Activated CD8-positive, alpha-beta T cell treated with anti-CD3 and anti-CD28 coated beads for 36 hours (primary cell): ENCODE measurements at regions of chr17 and their contacts with region 1.

Region 1: GRCh38 chr17:76182016-76182764 is 41.1 kb upstream of the FOXJ1 start:
- DNase-seq: peak; percentile 99
- ATAC-seq: peak; percentile 80
- H3K4me3 Mint-ChIP-seq: peak overlapping the region; percentile 56
- H3K27ac Mint-ChIP-seq: peak overlapping the region; percentile 96
- H3K4me1 Mint-ChIP-seq: peaks cover 65% of the 10 kb centered on the region
- H3K27me3 Mint-ChIP-seq: no peaks in the 10 kb centered on the region
- CTCF ChIP-seq: peak; percentile 73

Region 2: GRCh38 chr17:76022285-76022684 is 159.9 kb before region 1 on chr17:
- CTCF ChIA-PET with region 1: no interaction called
- POLR2A ChIA-PET with region 1: no interaction called
- intact Hi-C with region 1: no loop called
- DNase-seq: no peak
- ATAC-seq: no peak
- H3K4me3 Mint-ChIP-seq: no peak overlapping the region
- H3K27ac Mint-ChIP-seq: no peak overlapping the region
- H3K4me1 Mint-ChIP-seq: no peaks in the 10 kb centered on the region
- H3K27me3 Mint-ChIP-seq: no peaks in the 10 kb centered on the region
- CTCF ChIP-seq: no peak

Region 3: GRCh38 chr17:76088036-76088867 is 93.9 kb before region 1 on chr17:
- CTCF ChIA-PET with region 1: no interaction called
- POLR2A ChIA-PET with region 1: no interaction called
- intact Hi-C with region 1: no loop called
- DNase-seq: no peak
- ATAC-seq: no peak
- H3K4me3 Mint-ChIP-seq: no peak overlapping the region
- H3K27ac Mint-ChIP-seq: no peak overlapping the region
- H3K4me1 Mint-ChIP-seq: no peaks in the 10 kb centered on the region
- H3K27me3 Mint-ChIP-seq: no peaks in the 10 kb centered on the region
- CTCF ChIP-seq: no peak

Region 4: DNA sequence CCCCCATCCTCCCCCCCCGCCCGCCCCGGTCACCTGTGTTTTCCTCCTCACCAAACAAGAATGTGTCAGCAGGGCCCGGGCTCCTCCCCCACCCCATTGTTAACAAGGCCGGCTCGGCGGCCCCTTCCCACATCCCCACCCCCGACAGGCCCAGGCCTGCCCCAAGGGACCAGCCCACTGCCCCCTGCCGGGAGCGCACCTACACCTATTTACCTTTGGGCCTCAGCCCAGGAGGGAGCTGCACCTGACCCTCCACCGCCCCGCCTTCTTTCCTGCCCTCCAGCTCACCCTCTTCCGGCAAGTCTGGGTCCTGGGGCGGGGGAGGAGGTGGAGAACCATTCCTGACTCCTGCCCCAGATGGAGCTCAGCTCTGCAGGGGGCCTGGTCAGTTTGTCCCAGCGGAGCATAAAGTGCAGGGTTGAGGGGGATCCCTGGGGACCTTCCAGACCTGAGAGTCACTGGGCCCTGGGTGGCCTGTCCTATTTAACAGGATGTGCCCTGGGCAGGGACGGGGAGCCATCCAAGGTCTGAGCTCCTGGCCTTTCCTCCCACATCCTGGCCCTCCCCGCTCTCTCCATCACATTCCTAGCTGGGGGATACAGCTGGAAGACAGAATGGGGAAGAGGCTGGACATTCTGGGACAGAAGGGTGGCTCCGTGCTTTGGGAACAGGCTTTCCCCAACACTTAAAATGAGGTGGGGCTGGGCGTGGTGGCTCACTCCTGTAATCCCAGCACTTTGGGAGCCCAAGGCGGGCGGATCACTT is 49.4 kb before region 1 on chr17:
- CTCF ChIA-PET with region 1: interaction called, 25 read pairs
- POLR2A ChIA-PET with region 1: interaction called, 3 read pairs
- intact Hi-C with region 1: no loop called
- DNase-seq: no peak
- ATAC-seq: no peak
- H3K4me3 Mint-ChIP-seq: no peak overlapping the region
- H3K27ac Mint-ChIP-seq: no peak overlapping the region
- H3K4me1 Mint-ChIP-seq: peaks cover 18% of the 10 kb centered on the region
- H3K27me3 Mint-ChIP-seq: no peaks in the 10 kb centered on the region
- CTCF ChIP-seq: no peak

Region 5: GRCh38 chr17:76147211-76148014 is 34.8 kb before region 1 on chr17:
- CTCF ChIA-PET with region 1: interaction called, 80 read pairs
- POLR2A ChIA-PET with region 1: interaction called, 11 read pairs
- intact Hi-C with region 1: loop called (anchors 5 kb)
- DNase-seq: no peak
- ATAC-seq: no peak
- H3K4me3 Mint-ChIP-seq: no peak overlapping the region
- H3K27ac Mint-ChIP-seq: peak overlapping the region; percentile 94
- H3K4me1 Mint-ChIP-seq: peaks cover 70% of the 10 kb centered on the region
- H3K27me3 Mint-ChIP-seq: no peaks in the 10 kb centered on the region
- CTCF ChIP-seq: peak; percentile 16

Region 6: DNA sequence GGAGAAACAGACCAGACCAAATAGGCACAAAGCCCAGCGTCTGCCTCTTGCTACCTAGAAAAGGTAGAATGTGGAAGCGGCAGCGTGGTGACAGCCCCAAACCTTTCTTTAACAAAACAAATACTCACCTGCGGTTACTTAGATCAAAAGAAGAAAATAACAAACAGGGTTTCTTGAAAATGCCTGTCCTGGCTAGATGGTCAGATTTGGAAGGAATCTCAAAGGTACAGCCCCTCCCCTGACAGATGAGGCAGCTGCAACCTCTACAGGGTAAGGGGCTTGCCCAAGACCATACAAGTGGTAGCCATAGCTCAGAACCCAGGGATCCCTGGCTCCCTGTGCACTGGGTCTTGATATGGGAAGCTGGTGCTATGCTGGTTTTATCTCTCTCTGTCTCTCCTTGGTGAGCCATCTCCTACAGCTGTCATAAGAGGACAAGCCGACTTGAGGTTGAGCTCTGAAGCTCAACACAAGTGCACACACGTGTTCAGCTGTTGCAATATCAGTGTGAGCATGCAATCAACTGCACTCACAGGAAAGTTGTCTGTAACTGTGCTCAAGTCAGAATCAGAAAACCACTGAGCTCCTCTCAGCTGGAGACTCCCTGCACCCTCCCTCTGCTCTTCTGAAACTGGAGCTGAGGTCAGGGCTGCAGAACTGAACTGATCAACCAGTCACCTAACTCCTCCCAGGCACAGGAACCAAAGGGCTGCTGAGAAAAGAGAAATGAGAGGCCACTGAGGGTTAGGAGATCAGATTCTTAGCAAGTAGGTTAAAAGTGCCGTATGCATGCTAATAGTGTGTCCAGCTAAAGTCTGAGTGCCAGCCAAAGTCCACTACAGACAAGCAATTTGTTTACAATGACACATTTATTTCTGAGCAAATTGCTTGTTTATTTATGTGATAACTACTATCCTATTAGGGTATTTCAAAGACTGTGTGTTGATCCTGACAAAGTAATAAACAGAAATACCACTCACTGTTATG is 64.2 kb after region 1 on chr17:
- CTCF ChIA-PET with region 1: interaction called, 12 read pairs
- POLR2A ChIA-PET with region 1: interaction called, 700 read pairs
- intact Hi-C with region 1: no loop called
- DNase-seq: peak; percentile 86
- ATAC-seq: peak; percentile 98
- H3K4me3 Mint-ChIP-seq: peak overlapping the region; percentile 44
- H3K27ac Mint-ChIP-seq: peak overlapping the region; percentile 96
- H3K4me1 Mint-ChIP-seq: peaks cover 56% of the 10 kb centered on the region
- H3K27me3 Mint-ChIP-seq: no peaks in the 10 kb centered on the region
- CTCF ChIP-seq: no peak